Activated CD4-positive, alpha-beta T cell treated with anti-CD3 and anti-CD28 coated beads for 36 hours (primary cell): ENCODE measurements at regions of chr1 and their contacts with region 1.

Region 1: GRCh38 chr1:162430583-162430982 is 18.6 kb upstream of the SH2D1B start:
- DNase-seq: no peak
- ATAC-seq: no peak
- H3K4me3 Mint-ChIP-seq: no peak overlapping the region
- H3K27ac Mint-ChIP-seq: no peak overlapping the region
- H3K4me1 Mint-ChIP-seq: no peaks in the 10 kb centered on the region
- H3K27me3 Mint-ChIP-seq: peaks cover 3% of the 10 kb centered on the region

Region 2: DNA sequence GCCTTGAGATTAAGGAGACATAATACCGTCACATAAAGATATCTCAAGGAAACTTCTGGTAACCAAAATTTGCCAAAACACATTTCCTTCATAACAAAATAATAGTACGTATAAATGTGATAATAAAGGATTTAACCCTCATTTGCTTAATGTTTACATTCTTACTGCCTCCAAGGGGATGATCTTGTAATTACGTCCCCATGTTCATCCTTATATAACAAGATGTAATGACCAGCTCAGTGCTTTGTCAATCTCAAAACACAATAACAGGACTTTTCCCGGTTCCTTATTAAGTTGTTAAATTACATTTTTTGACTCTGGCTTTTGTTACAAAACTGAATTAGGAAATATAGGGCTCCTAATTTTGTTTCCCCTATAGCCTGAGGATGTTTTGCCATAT is 25.7 kb after region 1 on chr1:
- CTCF ChIA-PET with region 1: no interaction called
- POLR2A ChIA-PET with region 1: no interaction called
- intact Hi-C with region 1: loop called in 1 of 2 experiments (anchors 1 kb)
- DNase-seq: no peak
- ATAC-seq: no peak
- H3K4me3 Mint-ChIP-seq: no peak overlapping the region
- H3K27ac Mint-ChIP-seq: no peak overlapping the region
- H3K4me1 Mint-ChIP-seq: no peaks in the 10 kb centered on the region
- H3K27me3 Mint-ChIP-seq: peaks cover 3% of the 10 kb centered on the region